ENCODE measurements at regions of chr10 and their contacts with region 1.

Region 1: GRCh38 chr10:15427843-15428414 is 56.8 kb upstream of the FAM171A1 start:
- DNase-seq: peak; percentile 12
- H3K4me3 ChIP-seq: no peak overlapping the region
- H3K27me3 ChIP-seq: no peaks in the 10 kb centered on the region
- CTCF ChIP-seq: peak; percentile 54

Region 2: GRCh38 chr10:15227611-15228368 is 200.1 kb before region 1 on chr10:
- CTCF ChIA-PET with region 1: no interaction called
- POLR2A ChIA-PET with region 1: no interaction called
- DNase-seq: no peak
- H3K4me3 ChIP-seq: no peak overlapping the region
- H3K27me3 ChIP-seq: no peaks in the 10 kb centered on the region
- CTCF ChIP-seq: no peak

Region 3: DNA sequence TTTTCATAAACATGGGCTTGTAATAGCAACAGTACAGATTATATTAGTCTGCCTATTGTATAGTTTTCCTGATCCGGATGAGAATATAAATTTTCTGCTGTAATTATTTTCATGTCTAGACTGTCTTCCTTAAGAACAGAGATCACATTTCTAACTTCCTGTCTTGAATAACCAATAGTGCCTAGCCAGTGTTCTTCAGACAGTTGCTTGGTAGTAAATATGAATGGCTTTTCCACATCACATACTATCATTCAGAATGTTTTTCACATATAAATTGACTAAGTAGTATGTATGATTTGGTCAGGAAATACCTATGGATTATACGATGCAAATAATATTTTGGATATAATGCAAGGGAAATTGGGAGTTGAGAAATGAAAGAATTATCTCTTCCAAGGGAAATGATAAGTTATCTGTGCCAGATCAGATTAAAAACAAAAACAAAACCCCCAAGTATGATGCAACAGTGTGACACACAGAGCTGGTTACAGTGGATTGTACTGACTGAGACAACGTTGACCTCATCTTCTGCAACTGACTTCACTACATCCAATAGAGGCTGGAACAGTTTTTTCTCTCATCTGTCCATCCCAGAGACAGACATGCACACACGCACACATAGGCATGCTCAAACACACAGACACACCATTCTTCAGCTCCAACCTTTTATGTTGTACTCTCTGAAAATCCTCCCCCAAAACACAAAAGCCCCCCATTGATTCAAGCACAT is 275.4 kb after region 1 on chr10:
- CTCF ChIA-PET with region 1: no interaction called
- POLR2A ChIA-PET with region 1: no interaction called
- DNase-seq: no peak
- H3K4me3 ChIP-seq: no peak overlapping the region
- H3K27me3 ChIP-seq: no peaks in the 10 kb centered on the region
- CTCF ChIP-seq: no peak

Region 4: GRCh38 chr10:15725603-15726002 is 297.7 kb after region 1 on chr10:
- CTCF ChIA-PET with region 1: interaction called, 124 read pairs
- POLR2A ChIA-PET with region 1: no interaction called
- DNase-seq: no peak
- H3K4me3 ChIP-seq: no peak overlapping the region
- H3K27me3 ChIP-seq: no peaks in the 10 kb centered on the region; the same call in 1 of the 2 replicates
- CTCF ChIP-seq: peak; percentile 72

Measured in BJ (cell line).